ENCODE measurements at regions of chr12 and their contacts with region 1.

Region 1: GRCh38 chr12:48618541-48618940 is 48.7 kb upstream of the LALBA start:
- DNase-seq: peak; percentile 90
- H3K4me3 Mint-ChIP-seq: no peak overlapping the region
- H3K27ac Mint-ChIP-seq: no peak overlapping the region
- H3K4me1 Mint-ChIP-seq: peaks cover 2% of the 10 kb centered on the region
- H3K27me3 Mint-ChIP-seq: peaks cover 7% of the 10 kb centered on the region

Region 2: DNA sequence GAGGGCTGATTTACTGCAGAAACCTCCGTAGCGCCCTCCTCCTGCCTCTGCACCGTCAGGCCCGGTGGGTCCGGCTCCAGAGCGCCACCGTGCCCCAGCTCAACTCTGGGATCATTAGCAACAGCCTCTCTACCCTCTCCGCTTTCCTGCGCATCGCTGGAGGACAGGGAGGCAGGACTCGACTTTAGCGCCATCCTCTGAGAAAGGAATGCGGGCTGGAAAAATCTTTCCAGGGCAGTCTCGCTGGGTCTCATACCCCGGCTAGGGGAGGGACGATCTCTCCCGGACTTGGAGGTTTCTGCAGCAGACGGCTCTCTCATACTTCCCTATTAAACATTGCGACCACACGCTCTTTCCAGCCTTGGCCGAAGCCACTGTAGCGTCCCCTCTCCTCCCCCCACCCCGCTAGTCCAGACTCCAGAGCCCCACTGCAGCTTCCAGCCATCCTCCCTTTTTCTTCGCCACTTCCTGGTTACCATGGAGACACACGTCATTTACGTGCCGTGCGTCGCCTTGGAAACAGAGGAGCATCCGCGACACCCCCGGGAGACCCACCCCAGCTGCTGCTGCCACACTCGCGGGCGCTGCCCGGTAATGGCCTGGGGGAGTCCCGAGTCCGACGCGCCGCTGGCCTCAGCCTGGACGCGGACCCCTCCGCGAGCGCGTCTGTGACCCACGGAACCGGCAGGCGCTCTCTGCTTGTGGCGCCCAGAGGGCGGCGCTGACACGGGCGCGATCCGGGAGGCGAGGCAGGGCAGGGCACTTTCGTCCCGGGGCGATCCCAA is 435.3 kb before region 1 on chr12 and contains the start of gene CCDC184:
- CTCF ChIA-PET with region 1: interaction called, 4 read pairs
- intact Hi-C with region 1: loop called (anchors 5 kb)
- DNase-seq: peak; percentile 70
- H3K4me3 Mint-ChIP-seq: peak within 1 kb of the TSS; percentile 88
- H3K27ac Mint-ChIP-seq: no peak within 1 kb of the TSS
- H3K4me1 Mint-ChIP-seq: peaks cover 12% of the 10 kb centered on the region
- H3K27me3 Mint-ChIP-seq: peaks cover 15% of the 10 kb centered on the region
- total RNA-seq, gene CCDC184: 0.14 TPM in 1 of 2 experiments, not detected in the other

Region 3: GRCh38 chr12:48379780-48380179 is 238.8 kb before region 1 on chr12:
- CTCF ChIA-PET with region 1: interaction called, 5 read pairs
- intact Hi-C with region 1: loop called (anchors 10 kb)
- DNase-seq: no peak
- H3K4me3 Mint-ChIP-seq: no peak overlapping the region
- H3K27ac Mint-ChIP-seq: no peak overlapping the region
- H3K4me1 Mint-ChIP-seq: no peaks in the 10 kb centered on the region
- H3K27me3 Mint-ChIP-seq: no peaks in the 10 kb centered on the region

Region 4: GRCh38 chr12:48542300-48542928 is 76.1 kb before region 1 on chr12:
- CTCF ChIA-PET with region 1: interaction called, 141 read pairs
- intact Hi-C with region 1: loop called (anchors 1 kb)
- DNase-seq: peak; percentile 83
- H3K4me3 Mint-ChIP-seq: no peak overlapping the region
- H3K27ac Mint-ChIP-seq: no peak overlapping the region
- H3K4me1 Mint-ChIP-seq: peaks cover 14% of the 10 kb centered on the region
- H3K27me3 Mint-ChIP-seq: no peaks in the 10 kb centered on the region

Region 5: DNA sequence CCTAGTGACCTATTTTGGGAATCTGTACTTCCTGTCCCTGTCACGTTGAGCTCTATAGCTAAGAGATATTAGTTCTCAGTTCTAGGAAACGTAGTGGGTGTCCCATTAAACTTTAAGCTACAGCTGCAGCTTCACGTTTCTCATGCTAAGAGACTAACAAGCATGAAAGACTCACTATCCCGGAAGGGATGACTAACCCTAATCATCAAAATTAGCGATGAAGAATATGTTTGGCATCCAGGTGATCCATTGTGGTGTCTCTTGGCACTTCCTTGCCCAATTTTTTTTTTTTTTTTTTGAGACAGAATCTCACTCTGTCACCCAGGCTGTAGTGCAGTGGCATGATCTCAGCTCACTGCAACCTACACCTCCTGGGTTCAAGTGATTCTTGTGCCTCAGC is 37.7 kb before region 1 on chr12:
- CTCF ChIA-PET with region 1: interaction called, 13 read pairs
- intact Hi-C with region 1: no loop called
- DNase-seq: no peak
- H3K4me3 Mint-ChIP-seq: no peak overlapping the region
- H3K27ac Mint-ChIP-seq: no peak overlapping the region
- H3K4me1 Mint-ChIP-seq: no peaks in the 10 kb centered on the region
- H3K27me3 Mint-ChIP-seq: peaks cover 3% of the 10 kb centered on the region

Region 6: DNA sequence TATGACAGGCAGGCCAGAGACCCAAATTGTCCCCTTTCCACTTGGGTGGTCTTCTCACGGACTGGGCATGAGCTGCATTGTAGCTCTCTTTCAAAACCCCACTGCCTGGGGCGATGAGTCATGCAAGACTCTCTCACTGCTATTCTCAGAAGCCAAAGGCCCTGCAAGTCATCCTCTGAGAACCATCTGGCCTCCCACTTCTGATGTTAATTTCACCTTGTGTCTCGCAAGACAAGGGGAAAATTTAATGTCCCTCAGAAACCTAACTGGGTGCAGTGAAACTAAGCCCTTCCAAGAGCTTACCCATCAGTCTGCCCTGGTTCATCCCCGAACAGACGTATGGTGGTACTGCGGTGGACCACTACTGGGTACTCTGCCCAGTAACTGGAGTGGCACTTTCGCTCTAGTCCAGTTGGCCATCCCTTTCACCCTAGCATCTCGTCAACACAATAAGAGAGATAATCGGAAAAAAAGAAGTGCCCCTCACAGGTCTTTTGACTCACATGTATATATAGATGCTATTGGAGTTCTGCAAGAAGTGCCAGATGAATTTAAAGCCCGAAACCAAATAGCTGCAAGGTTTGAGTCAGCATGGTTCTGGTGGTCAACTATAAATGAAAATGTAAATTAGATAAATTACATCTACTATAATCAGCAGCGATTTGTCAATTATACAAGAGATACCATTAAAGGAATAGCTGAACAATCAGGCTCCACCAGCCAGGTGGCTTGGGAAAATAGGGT is 17.4 kb before region 1 on chr12:
- CTCF ChIA-PET with region 1: interaction called, 19 read pairs
- intact Hi-C with region 1: no loop called
- DNase-seq: peak; percentile 16
- H3K4me3 Mint-ChIP-seq: no peak overlapping the region
- H3K27ac Mint-ChIP-seq: no peak overlapping the region
- H3K4me1 Mint-ChIP-seq: no peaks in the 10 kb centered on the region
- H3K27me3 Mint-ChIP-seq: no peaks in the 10 kb centered on the region

Region 7: DNA sequence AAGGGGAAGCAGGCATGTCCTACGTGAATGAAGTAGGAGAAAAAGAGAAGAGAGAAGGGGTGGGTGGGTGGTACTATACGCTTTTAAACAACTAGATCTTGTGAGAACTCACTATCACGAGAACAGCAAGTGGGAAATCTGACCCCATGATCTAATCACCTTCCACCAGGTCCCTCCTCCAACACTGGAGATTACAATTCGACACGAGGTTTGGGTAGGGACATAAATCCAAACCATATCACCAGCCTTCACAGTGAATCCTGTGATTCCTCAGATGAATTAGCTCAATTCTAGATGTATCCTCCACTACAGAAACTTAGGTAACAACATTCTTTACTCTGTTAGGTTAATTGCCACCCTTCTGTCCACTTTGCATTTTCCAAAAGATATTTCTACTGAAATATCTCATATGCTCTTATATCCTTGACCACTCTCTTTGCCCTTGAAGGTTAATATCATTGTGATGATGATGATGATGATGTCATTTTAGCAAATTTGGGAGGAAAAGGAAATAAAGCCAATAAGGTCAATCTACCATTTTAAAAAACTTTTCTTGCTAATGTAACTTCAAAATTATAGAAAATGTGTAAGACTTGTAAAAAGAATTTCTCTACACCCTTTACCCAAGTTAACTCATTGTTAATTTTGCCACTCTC is 121.2 kb after region 1 on chr12:
- CTCF ChIA-PET with region 1: no interaction called
- intact Hi-C with region 1: no loop called
- DNase-seq: no peak
- H3K4me3 Mint-ChIP-seq: no peak overlapping the region
- H3K27ac Mint-ChIP-seq: no peak overlapping the region
- H3K4me1 Mint-ChIP-seq: no peaks in the 10 kb centered on the region
- H3K27me3 Mint-ChIP-seq: peaks cover 8% of the 10 kb centered on the region

Region 8: DNA sequence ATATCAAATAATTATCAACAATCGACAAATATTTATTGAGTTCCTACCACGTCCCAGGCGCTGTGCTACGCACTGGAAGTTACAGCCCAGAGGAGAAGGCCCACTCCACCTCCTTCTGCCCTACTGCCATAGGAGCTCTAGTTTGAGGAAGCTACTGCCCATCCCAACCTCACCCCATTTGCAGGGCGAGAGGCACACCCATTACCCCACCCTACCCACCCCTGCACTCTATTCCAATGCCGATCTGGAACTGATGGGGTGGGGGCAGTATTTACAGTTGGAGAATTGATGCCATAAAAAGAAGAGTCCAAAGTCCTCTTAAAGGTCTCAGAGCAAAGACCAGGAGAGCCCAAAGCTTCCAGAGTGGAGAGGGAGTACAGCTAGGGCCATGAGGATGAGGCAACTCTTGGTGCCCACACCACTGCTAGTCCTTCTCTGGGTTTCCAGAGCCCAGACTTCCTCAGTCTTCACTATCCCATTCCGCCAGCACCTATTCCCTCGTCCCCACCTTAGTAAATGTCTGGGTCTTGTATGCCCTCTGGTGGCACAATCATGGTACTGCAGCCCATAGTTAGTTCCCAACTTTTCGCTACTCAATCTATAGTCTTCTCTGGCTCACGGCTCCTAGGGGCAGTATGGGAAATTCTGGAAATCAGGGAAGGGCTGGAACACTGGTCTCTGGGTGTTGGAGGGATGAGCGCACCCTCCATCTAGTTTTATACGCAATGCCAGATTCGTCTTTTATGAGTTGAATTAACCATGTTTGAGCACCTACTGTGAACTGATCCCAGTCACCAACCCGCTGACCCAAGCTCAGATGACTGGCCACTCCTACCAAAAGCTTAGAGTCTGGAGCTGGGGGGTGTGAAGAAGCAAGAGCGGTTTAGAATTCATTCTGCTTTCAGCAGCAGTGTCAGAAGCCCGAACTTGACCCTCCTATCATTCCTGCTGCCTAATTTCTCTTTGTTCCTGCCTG is 177.2 kb after region 1 on chr12:
- CTCF ChIA-PET with region 1: interaction called, 16 read pairs
- intact Hi-C with region 1: loop called (anchors 5 kb)
- DNase-seq: peak; percentile 74
- H3K4me3 Mint-ChIP-seq: no peak overlapping the region
- H3K27ac Mint-ChIP-seq: no peak overlapping the region
- H3K4me1 Mint-ChIP-seq: no peaks in the 10 kb centered on the region
- H3K27me3 Mint-ChIP-seq: peaks cover 8% of the 10 kb centered on the region

Measured in activated naive CD4-positive, alpha-beta T cell treated with anti-CD3 and anti-CD28 coated beads for 36 hours (primary cell).